K562 (cell line): ENCODE measurements at regions of chr6 and their contacts with region 1.

Region 1: GRCh38 chr6:167317172-167317571 is 7.7 kb upstream of the TTLL2 start:
- DNase-seq: no peak
- ATAC-seq: no peak
- H3K4me3 ChIP-seq: no peak overlapping the region
- H3K27ac ChIP-seq: no peak overlapping the region
- H3K4me1 ChIP-seq: no peaks in the 10 kb centered on the region
- H3K27me3 ChIP-seq: peaks cover 22 to 39% of the 10 kb centered on the region in 2 experiments; a peak in 4 of 5 replicates
- CTCF ChIP-seq: no peak
- EP300 ChIP-seq: no peak
- POLR2A ChIP-seq: no peak
- RAD21 ChIP-seq: no peak

Region 2: DNA sequence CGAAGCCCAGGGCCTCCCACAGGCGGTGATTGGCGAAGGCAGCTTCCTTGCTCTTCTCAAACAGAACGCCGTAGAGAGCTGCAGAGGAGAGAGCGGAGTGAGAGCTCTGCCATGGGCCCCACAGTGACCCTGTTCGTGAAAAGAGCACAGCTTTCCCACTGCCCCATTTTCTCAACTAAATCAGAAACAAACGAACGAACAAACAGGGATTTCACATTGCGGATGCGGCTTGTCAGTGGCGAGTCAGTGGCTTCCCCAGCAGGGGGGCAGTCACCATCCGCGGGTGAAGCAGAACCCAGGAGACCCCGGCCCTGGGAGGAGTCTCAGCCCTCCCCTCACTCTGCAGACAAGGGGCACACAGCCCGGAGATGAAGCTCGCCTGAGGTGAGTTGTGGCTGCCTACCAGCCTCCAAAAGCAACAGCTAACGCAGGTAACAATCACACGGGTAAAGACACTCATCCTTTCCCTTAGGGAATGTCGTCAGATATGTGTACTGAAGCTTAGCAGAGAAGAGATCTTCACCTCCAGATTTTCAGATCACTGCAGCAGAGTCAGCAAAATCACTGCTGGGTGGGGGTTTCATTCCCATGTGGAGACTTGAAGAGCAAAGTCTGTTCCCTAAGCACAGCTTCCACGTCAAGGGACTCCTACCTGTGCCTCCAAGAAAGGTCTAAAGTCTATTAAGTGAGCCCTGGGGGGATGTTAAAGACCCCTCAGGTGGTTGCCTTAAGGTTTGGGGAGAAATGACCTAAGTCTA is 108.2 kb before region 1 on chr6:
- CTCF ChIA-PET with region 1: no interaction called
- POLR2A ChIA-PET with region 1: no interaction called
- in situ Hi-C with region 1: loop called (anchors 5 kb)
- intact Hi-C with region 1: no loop called
- DNase-seq: no peak
- ATAC-seq: no peak; the same call in 2 of the 3 replicates
- H3K4me3 ChIP-seq: no peak overlapping the region
- H3K27ac ChIP-seq: no peak overlapping the region
- H3K4me1 ChIP-seq: no peaks in the 10 kb centered on the region
- H3K27me3 ChIP-seq: peaks cover 33 to 59% of the 10 kb centered on the region in 2 experiments
- CTCF ChIP-seq: no peak
- EP300 ChIP-seq: no peak
- POLR2A ChIP-seq: no peak
- RAD21 ChIP-seq: no peak